Dorsolateral prefrontal cortex (tissue), 120 donors: ENCODE measurements at regions of chr17 and their contacts with region 1.

Region 1: DNA sequence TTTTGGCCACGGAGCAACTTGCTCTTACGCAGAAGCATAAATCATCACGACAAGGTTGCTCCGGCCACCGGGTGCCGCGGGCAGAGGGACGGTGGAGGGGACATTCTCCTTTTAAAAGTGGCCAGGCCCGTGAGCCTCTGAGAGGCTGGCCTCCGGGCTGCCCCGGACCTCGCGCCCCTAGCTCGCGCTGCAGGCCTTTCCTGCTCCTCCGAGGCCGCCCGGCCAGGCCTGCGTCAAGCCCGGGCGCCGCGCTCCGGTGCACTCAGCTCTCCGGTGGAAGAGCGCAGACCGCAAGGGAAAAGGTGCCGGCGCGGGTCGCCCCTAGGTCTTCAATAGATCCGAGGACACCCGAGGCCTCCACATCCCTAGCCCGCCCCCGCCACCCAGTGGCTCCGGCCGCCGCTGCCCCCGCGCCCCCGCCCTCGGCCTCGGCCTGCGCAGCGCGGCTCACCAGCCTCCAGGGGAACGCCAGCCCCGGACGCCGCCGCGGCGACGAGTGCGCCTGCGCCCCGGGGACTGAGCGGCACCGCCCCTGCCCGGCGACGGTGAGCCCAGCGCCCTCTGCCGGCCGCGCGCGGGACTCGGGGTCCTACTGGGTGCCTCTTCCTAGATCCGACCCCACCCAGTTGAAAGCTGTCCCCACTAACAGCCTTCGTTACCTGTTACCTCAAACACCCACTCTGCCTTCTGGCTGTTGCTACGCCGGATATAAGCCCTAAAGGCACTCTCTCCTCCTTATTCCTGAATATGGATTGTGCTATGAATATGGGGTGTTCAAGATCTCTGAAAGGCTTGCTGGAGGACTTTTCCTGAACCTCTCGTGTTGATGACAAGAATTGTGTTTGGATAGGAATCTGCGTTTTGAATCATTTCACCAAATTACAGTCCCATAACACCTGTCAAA is at the start of gene LYRM9:
- DNase-seq: peak; percentile 82 to 94 (median 89)
- H3K4me3 ChIP-seq: peak within 1 kb of the TSS; percentile 59 to 100 (median 87)
- H3K27ac ChIP-seq: peak within 1 kb of the TSS; percentile 74 to 99 (median 96)
- H3K27me3 ChIP-seq: no peaks in the 10 kb centered on the region
- CTCF ChIP-seq: peak; percentile 60 to 99 (median 92)
- total RNA-seq, gene LYRM9: 9.1 to 68.0 (median 37.2) TPM

Region 2: DNA sequence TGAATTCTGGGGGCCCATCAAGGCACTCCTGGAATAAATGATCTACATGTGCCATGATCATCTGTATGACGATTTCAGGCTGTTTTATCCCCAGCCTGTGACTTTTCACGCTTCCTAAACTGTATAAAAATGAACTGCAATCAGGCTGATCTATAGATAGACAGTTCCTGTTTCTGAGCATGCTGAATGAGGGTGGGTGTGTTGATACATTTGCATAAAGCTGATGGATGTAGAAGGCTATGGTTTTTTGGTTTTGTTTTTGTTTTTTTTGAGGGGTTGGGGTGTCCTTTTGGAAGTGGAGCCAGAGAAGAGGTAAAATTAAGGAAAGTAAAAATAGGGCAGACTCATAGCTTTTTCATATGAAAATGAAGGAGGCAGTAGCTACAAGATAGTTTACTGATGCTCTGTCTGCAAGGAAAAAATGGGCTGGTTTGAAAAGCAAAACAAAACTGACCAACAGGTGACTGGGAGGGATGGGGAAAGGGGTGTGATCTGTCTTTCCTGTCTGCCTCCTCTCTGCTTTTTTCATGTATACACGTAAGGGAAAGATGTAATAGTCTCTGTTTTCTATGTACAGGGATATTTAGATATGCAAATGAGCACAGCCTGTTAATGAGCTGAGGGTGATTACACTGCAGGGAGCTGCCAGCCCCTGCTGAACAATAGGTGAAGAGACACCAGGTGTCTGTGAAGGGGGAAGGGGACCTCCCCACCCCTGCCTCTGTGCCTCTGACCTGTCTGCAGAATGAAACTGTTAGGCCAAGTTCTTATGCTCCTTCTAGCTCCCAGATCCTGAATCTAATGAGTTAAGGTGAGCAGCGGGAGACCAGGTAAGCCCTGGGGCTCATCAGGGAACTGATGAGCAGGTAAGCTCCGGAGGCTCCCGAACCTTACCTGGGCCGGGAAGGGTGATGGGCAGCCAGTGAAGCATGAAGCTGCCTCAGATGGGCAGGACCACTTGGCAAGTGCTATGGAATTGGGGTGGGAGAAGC is 46.7 kb after region 1 on chr17:
- intact Hi-C with region 1: loop called in 1 of 2 experiments (anchors 10 kb)
- DNase-seq: no peak
- H3K4me3 ChIP-seq: no peak overlapping the region
- H3K27ac ChIP-seq: peak overlapping the region in 48 of 59 donors; percentile 7 to 79 (median 60)
- H3K27me3 ChIP-seq: no peaks in the 10 kb centered on the region
- CTCF ChIP-seq: no peak

Region 3: DNA sequence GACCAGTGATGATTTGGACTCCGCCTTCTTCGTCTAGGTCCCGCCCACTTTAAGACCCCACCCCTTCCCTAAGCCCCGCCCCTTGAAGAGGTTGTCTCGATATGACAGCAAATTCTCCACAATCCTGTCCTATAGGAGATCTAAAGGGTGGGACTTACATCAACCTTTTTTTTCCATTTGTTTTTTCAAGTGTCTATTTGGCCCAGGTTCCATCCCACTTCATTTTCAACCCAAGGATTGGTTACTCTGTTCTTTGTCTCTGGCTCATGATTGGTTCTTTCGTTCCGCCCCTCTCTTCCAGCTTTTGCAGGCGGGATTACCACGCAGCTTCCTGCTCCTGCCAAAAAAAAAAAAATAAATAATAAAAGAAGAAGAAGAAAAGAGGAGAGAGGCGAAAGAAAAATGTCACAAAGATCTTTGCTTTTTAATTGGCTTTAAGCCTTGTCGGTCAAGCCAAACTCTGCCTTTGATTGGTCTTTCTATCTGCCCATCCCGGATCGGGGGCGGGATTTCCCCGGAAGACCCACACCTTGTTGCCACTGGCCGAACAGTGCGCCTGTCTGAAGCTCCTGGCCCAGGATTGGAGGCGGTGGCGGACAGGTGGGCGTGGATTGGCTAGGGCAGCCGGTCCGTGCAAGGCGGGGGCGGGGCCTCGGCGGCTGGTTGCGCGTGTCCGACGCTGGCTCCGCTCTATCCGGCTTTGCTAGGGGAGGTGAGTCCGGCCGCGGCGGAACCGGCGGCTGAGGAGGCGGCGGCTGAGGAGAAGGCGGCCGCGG is 148.1 kb after region 1 on chr17:
- intact Hi-C with region 1: loop called (anchors 2 to 5 kb)
- DNase-seq: peak; percentile 98 to 100 (median 100)
- H3K4me3 ChIP-seq: peak overlapping the region; percentile 64 to 99 (median 91)
- H3K27ac ChIP-seq: peak overlapping the region; percentile 60 to 96 (median 90)
- H3K27me3 ChIP-seq: no peaks in the 10 kb centered on the region
- CTCF ChIP-seq: peak in 4 of 56 donors; percentile 11 to 12 (median 12)

Region 4: DNA sequence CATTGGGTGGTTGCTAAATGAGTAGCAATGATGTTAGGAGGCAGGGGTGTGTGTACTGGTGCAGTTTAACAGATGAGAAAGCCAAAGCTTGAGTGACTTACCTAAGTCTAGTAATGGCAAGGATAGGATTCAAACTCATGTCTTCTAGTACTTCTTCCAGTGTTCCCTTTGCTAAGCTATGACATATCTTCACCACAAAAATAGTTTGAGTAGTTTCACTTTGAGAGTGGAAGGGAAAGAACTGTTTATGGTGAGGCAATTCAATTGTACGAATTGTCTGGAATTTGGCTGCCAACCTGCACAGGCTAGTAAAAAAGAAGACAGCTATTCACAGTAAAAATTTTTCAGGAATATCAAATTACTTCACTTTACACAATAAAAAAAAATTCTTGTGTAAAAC is 287.3 kb after region 1 on chr17:
- intact Hi-C with region 1: loop called in 1 of 2 experiments (anchors 10 kb)
- DNase-seq: no peak
- H3K4me3 ChIP-seq: no peak overlapping the region
- H3K27ac ChIP-seq: peak overlapping the region in 4 of 59 donors; percentile 7 to 49 (median 8)
- H3K27me3 ChIP-seq: no peaks in the 10 kb centered on the region
- CTCF ChIP-seq: no peak

Region 5: GRCh38 chr17:28252436-28252835 is 359.3 kb after region 1 on chr17:
- intact Hi-C with region 1: loop called (anchors 5 kb)
- DNase-seq: no peak
- H3K4me3 ChIP-seq: no peak overlapping the region
- H3K27ac ChIP-seq: no peak overlapping the region
- H3K27me3 ChIP-seq: no peaks in the 10 kb centered on the region
- CTCF ChIP-seq: no peak